Common myeloid progenitor, CD34-positive (primary cell): ENCODE measurements at regions of chr7 and their contacts with region 1.

Region 1: GRCh38 chr7:992709-993607 is 10.0 kb downstream of the CYP2W1 start:
- DNase-seq: peak; percentile 95 to 97 (median 97)
- H3K4me3 ChIP-seq: no peak overlapping the region
- H3K27ac ChIP-seq: no peak overlapping the region
- H3K4me1 ChIP-seq: peaks cover 0 to 36% (median 26%) of the 10 kb centered on the region in 4 experiments
- H3K27me3 ChIP-seq: peaks cover 0 to 11% (median 0%) of the 10 kb centered on the region in 5 experiments

Region 2: DNA sequence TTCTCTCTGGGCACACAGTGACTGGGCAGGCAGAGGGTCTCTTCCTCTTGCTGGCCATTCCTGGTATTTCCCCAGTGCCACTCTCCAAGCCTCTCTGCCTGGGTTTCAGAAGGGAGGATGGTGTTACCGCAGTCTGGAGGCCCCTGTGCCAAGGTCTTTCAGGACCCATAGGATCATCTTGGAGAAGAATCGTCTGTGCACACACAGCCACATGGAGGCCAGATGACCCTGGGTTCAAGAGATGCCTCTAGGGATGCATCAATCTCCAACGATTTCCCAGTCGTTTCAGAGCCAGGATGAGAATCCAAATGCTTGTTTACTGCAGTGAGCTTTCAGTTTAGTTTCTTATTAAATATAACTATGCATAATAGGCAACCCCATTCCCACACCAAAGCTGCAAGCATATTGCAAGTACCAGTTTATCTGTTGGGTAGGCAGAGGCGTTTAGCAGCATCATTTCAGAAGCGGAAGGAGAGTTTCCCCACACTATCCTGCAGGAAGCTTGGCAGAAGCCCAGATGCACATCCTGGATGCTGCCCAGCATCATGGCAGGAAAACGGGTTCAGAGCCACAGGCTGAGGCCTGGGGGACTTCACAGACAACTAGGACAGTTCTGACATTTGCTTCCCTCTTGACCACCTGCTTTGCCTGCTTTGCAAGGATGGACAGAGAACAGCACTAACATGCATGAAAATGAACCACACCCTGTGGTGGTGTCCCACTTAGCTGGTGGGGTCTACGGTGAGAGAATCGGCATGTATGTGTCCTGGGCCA is 935.3 kb before region 1 on chr7:
- CTCF ChIA-PET with region 1: no interaction called
- POLR2A ChIA-PET with region 1: no interaction called
- DNase-seq: no peak
- H3K4me3 ChIP-seq: no peak overlapping the region
- H3K27ac ChIP-seq: no peak overlapping the region
- H3K4me1 ChIP-seq: no peaks in the 10 kb centered on the region
- H3K27me3 ChIP-seq: no peaks in the 10 kb centered on the region

Region 3: DNA sequence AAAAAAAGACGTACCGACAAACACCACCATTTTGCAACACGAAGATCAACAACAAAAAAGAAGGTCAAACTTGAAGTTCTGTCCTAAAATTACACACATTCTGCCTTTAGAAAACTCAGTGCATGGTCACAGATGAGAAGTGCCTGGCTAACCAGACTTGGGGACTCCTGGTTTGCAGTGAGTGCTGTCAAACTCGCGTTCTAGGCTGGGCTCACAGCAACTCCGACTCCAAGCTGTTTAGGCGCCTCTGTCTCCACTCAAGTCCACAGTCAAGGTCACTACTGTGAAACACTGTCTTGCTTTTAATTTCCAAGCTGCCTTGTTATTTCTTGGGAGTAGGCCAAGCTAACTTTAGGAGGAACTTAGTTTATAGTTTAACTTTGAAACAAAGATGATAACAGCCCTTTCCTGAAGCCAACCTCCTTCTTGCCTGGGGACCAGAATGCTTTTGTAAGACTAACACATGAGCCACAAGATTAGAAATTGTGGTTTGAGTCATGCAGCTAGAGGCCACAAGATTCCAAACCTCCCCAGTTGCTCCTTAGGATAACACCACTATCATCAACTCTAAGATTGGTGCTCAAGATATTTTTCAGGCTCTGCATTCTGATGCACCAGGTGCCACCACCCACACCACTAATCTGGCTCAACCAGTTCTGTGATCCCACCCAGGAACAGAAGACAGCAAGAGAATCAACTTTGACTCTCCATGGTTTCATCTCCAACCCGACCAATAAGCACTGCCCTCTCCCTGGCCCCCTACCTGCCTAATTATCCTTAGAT is 267.5 kb before region 1 on chr7:
- CTCF ChIA-PET with region 1: no interaction called
- POLR2A ChIA-PET with region 1: no interaction called
- DNase-seq: peak in 1 of 3 donors; percentile 37
- H3K4me3 ChIP-seq: peak overlapping the region in 4 of 7 experiments; percentile 71 to 85 (median 80)
- H3K27ac ChIP-seq: no peak overlapping the region
- H3K4me1 ChIP-seq: peaks cover 0 to 17% (median 14%) of the 10 kb centered on the region in 4 experiments
- H3K27me3 ChIP-seq: no peaks in the 10 kb centered on the region

Region 4: DNA sequence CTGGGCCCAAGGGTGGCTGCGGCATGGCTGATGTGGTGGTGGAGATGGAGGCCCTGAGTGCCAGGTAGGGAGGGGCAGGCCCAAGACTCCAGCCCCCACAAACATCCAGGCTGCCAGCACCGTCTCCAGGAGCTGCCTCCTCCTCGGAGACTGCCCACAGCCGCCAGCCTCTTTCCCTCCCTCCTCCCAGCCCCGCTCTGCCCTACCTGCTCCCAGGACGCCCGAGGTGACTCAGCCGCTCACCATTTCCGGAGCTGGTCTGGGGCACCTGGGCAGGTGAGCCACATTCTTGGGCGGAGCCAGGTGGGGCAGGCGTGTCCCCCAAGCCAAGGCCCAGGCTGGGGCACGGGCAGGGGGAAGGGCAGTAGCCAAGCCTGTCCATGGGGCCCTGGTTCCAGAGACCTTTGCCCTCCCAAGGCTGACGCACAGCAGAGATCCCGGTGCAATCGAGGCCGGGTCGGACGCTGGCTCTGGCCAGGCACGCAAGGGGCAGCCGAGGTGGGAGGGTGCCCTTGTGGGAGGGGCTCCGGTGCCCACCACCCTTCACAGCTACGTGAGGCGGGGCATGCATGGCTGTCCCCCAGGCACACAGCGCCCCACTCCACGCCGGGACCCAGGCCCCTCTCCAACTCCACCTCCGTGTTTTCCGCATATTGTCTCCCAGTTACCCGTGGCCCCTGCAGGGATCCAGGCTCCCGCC is 47.3 kb before region 1 on chr7:
- CTCF ChIA-PET with region 1: no interaction called
- POLR2A ChIA-PET with region 1: no interaction called
- DNase-seq: no peak
- H3K4me3 ChIP-seq: no peak overlapping the region
- H3K27ac ChIP-seq: no peak overlapping the region
- H3K4me1 ChIP-seq: peaks cover 0 to 12% (median 0%) of the 10 kb centered on the region in 4 experiments
- H3K27me3 ChIP-seq: peaks cover 0 to 3% (median 0%) of the 10 kb centered on the region in 5 experiments

Region 5: DNA sequence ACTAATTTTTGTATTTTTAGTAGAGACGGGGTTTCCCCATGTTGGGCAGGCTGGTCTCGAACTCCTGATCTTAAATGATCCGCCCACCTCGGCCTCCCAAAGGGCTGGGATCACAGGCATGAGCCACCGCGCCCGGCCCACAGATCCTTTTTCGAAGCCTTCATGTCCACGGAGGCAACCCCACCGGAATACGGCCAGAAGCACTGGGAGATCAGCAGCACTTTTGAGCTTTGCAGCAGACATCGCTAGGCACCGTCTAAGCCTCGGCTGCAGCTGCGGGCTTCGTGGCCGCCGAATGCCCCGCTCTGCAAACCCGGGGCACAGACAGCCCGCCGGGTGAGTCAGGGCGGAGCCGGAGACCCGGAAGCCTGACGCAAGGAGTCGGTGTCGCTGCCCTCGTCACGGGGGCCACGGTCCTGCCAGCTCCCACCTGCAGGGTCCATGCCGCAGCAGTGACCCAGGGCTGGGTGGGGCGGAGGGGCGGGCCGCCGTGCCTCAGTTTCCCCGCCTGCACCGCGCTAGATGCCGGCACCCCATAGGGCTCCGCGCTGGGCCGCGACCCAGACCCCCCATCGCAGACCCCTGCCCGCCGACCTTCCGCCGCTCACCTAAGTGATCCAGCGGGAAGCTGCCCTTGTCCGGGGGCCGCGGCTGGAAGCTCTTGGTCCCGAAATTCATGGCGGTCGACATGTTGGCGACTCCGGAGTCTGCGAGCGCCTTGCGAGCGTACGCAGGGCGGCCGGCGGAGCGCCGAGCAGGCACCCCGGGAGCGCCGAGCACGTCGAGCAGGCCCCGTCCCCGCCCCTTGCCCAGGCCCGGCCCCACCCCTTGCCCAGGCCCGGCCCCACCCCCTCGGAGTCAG is 17.9 kb before region 1 on chr7 and contains the start of gene COX19:
- CTCF ChIA-PET with region 1: interaction called, 41 read pairs
- POLR2A ChIA-PET with region 1: interaction called, 9 read pairs
- DNase-seq: peak; percentile 91 to 96 (median 95)
- H3K4me3 ChIP-seq: peak within 1 kb of the TSS; percentile 69 to 97 (median 89)
- H3K27ac ChIP-seq: peak within 1 kb of the TSS; percentile 93 to 95
- H3K4me1 ChIP-seq: peaks cover 3 to 23% (median 13%) of the 10 kb centered on the region in 4 experiments
- H3K27me3 ChIP-seq: no peaks in the 10 kb centered on the region

Region 6: DNA sequence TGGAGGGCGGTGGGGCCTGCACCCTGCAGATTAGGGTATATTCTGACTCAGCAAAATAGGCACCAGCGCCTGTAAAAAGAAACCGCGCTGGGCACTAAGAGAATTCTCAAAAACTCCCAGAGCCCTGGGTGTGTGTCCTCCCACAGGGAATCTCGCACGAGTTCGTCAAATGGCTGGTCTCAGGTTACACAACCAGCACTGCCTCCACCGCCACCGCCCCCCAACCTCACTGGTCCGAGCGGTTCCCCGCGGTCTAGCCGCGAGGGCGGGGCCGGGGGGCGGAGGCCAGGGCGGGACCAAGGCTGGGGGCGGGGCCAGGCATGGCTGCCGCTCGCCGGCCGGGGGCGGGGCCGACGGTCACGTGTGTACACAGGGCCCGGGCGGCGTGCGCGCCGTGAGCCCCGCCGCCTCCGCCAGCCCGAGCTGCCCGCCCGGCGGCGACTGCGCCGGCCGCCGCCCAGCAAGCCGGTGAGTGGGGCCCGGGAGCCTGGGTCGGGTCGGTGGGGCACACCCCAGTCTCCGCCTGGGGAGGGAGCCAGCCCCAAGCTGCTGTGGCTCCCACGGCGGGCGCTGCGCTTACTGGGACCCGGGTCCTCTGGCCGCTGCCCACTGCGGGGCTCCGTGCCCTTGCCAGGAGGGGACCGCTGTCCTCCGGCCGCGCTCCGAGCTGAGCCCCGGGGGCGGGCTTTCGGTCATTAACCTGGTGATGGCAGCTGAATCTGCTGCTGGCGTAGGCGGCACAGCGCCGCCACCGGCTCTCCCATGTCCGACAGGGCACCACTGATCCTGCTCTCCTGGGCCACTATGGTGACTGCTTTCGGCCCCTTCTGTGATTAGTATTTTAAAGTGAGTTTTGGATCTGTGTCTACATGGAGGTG is 51.5 kb after region 1 on chr7 and contains the start of gene GPR146:
- CTCF ChIA-PET with region 1: interaction called, 60 read pairs
- POLR2A ChIA-PET with region 1: no interaction called
- DNase-seq: peak; percentile 89 to 97 (median 96)
- H3K4me3 ChIP-seq: peak within 1 kb of the TSS; percentile 46 to 84 (median 73)
- H3K27ac ChIP-seq: peak within 1 kb of the TSS; percentile 51 to 83
- H3K4me1 ChIP-seq: peaks cover 12 to 83% (median 72%) of the 10 kb centered on the region in 4 experiments
- H3K27me3 ChIP-seq: no peaks in the 10 kb centered on the region

Region 7: GRCh38 chr7:1073142-1073977 is 80.4 kb after region 1 on chr7:
- CTCF ChIA-PET with region 1: interaction called, 28 read pairs
- POLR2A ChIA-PET with region 1: no interaction called
- DNase-seq: peak in 2 of 3 donors; percentile 67 to 70
- H3K4me3 ChIP-seq: peak overlapping the region in 4 of 7 experiments; percentile 27 to 63 (median 53)
- H3K27ac ChIP-seq: no peak overlapping the region
- H3K4me1 ChIP-seq: peaks cover 0 to 6% (median 5%) of the 10 kb centered on the region in 4 experiments
- H3K27me3 ChIP-seq: peaks cover 0 to 2% (median 0%) of the 10 kb centered on the region in 5 experiments

Region 8: DNA sequence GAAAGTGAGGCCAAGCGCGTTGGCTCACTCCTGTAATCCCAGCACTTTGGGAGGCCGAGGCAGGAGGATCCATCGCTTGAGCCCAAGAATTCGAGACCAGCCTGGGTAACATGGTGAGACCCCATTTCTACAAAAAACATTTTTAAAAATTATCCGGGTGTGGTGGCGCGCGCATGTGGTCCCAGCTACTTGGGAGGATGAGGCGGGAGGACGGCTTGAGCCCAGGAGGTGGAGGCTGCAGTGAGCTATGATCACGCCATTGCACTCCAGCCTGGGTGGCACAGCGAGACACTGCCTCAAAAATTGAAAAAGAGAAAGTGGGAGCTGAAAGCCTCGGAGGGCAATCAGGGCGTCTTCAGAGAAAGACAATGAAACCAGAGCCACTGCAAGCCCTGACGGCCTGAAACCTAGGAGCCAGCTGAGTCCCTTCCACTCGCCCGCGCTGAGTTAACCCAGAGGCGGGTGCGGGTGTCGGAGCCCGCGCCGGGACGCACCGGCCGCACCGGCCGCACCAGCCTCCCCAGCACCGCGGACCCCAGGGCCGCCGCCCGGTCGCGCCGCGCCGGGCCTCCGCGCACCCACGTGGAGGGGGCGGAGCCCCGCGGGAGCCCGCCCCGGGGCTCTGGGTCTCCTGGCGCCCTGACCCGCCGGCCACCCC is 144.7 kb after region 1 on chr7:
- CTCF ChIA-PET with region 1: interaction called, 23 read pairs
- POLR2A ChIA-PET with region 1: no interaction called
- DNase-seq: no peak
- H3K4me3 ChIP-seq: peak overlapping the region; percentile 65 to 93 (median 87)
- H3K27ac ChIP-seq: peak overlapping the region; percentile 68 to 89
- H3K4me1 ChIP-seq: peaks cover 0 to 16% (median 15%) of the 10 kb centered on the region in 4 experiments
- H3K27me3 ChIP-seq: no peaks in the 10 kb centered on the region

Region 9: GRCh38 chr7:1175967-1176851 is 183.3 kb after region 1 on chr7:
- CTCF ChIA-PET with region 1: interaction called, 14 read pairs
- POLR2A ChIA-PET with region 1: no interaction called
- DNase-seq: peak; percentile 38 to 64 (median 58)
- H3K4me3 ChIP-seq: peak overlapping the region in 3 of 7 experiments; percentile 44 to 65 (median 55)
- H3K27ac ChIP-seq: no peak overlapping the region
- H3K4me1 ChIP-seq: peaks cover 0 to 11% (median 8%) of the 10 kb centered on the region in 4 experiments
- H3K27me3 ChIP-seq: no peaks in the 10 kb centered on the region